Calu3 (cell line): ENCODE measurements at regions of chr6 and their contacts with region 1.

Region 1: GRCh38 chr6:1767481-1768251 is 158.0 kb downstream of the FOXC1 start:
- DNase-seq: peak; percentile 29
- H3K4me3 Mint-ChIP-seq: no peak overlapping the region
- H3K27ac Mint-ChIP-seq: peak overlapping the region; percentile 67
- H3K4me1 Mint-ChIP-seq: peaks cover 57% of the 10 kb centered on the region
- H3K27me3 Mint-ChIP-seq: no peaks in the 10 kb centered on the region
- CTCF ChIP-seq: no peak

Region 2: DNA sequence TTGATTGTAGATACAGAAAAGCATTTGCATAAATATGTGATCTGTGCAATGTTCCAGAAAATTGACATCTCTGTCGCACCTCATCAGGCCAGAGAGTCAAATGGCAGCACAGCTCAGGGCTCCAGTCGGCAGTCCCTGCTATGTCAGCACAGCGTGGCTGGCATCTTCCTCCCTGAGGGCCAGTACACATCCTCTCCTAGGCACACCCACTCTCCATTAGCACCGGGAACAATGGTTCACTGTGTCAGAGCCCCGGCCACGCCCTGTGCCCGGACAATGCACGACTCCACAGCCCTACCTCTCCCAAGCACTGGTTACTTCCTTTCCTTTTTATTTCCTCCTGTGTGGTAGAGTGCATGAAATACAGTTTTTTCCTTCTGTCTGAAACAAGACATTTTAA is 43.0 kb before region 1 on chr6:
- CTCF ChIA-PET with region 1: interaction called, 3 read pairs
- intact Hi-C with region 1: loop called (anchors 2 kb)
- DNase-seq: peak; percentile 89
- H3K4me3 Mint-ChIP-seq: peak overlapping the region; percentile 43
- H3K27ac Mint-ChIP-seq: peak overlapping the region; percentile 74
- H3K4me1 Mint-ChIP-seq: peaks cover 37% of the 10 kb centered on the region
- H3K27me3 Mint-ChIP-seq: no peaks in the 10 kb centered on the region
- CTCF ChIP-seq: no peak